ENCODE measurements at regions of chr20 and their contacts with region 1.

Region 1: GRCh38 chr20:53555081-53555480 is 38.6 kb downstream of the ZNF217 start:
- DNase-seq: no peak
- ATAC-seq: no peak
- H3K4me3 Mint-ChIP-seq: no peak overlapping the region
- H3K27ac Mint-ChIP-seq: no peak overlapping the region
- H3K4me1 Mint-ChIP-seq: peaks cover 4% of the 10 kb centered on the region
- H3K27me3 Mint-ChIP-seq: no peaks in the 10 kb centered on the region

Region 2: DNA sequence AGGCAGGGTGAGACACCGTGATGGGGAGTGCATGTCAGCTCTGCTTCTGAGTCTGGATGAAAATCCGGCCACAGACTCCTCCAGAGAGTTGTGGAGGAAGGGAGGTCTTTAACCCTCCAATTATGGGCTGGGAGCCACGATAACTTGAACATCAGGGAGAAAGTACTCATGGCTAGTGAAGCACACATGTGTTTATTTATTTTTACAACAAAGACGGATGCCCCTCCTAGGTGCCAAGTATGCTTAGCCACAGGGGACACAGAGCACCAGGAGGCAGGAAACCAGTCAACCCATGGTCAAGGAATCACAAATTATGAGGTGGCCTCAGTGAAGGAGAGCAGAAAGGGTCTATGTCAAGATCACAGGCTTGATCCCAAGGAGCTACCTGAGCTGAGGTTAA is 15.6 kb before region 1 on chr20:
- POLR2A ChIA-PET with region 1: no interaction called
- DNase-seq: no peak
- ATAC-seq: no peak
- H3K4me3 Mint-ChIP-seq: no peak overlapping the region
- H3K27ac Mint-ChIP-seq: no peak overlapping the region
- H3K4me1 Mint-ChIP-seq: no peaks in the 10 kb centered on the region
- H3K27me3 Mint-ChIP-seq: no peaks in the 10 kb centered on the region

Region 3: GRCh38 chr20:53582574-53583351 is 27.7 kb after region 1 on chr20:
- POLR2A ChIA-PET with region 1: no interaction called
- DNase-seq: no peak
- ATAC-seq: peak; percentile 32
- H3K4me3 Mint-ChIP-seq: peak overlapping the region; percentile 96
- H3K27ac Mint-ChIP-seq: peak overlapping the region; percentile 92
- H3K4me1 Mint-ChIP-seq: peaks cover 65% of the 10 kb centered on the region
- H3K27me3 Mint-ChIP-seq: no peaks in the 10 kb centered on the region

Region 4: DNA sequence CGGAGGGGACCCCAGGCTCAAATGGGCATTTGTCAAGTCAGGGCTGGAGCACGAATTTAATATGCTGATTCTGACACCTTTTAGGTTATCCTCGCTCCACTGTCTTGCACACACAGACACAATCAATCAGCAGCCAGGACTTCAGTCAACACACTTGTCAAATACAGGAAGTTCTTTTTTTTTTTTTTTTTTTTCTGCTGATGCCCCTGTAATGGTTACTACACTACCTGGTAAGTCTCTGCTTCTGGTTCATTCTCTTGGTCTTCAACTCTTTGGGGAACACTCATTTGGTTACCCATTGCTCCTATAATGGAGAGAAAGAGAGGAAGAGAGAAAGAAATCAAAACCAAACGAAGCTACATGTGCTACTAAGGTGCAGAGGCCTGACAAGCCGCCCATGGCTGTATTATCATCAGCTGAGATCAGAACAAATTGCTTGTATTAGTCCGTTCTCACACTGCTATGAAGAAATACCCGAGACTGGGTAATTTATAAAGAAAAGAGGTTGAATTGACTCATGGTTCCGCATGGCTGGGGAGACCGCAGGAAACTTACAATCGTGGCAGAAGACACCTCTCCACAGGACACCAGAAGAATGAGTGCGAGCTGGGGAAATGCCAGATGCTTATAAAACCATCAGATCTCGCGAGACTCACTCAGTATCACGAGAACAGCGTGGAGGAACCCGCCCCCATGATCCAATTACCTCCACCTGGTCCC is 503.5 kb after region 1 on chr20:
- POLR2A ChIA-PET with region 1: interaction called, 10 read pairs
- DNase-seq: no peak
- ATAC-seq: no peak
- H3K4me3 Mint-ChIP-seq: no peak overlapping the region
- H3K27ac Mint-ChIP-seq: no peak overlapping the region
- H3K4me1 Mint-ChIP-seq: peaks cover 7% of the 10 kb centered on the region
- H3K27me3 Mint-ChIP-seq: no peaks in the 10 kb centered on the region

Measured in activated naive CD8-positive, alpha-beta T cell treated with anti-CD3 and anti-CD28 coated beads, Interleukin-2, amount 10 ng/mL, durations not matched to agents 7 days and 5 days (primary cell).